ENCODE measurements at regions of chr13 and their contacts with region 1.

Region 1: DNA sequence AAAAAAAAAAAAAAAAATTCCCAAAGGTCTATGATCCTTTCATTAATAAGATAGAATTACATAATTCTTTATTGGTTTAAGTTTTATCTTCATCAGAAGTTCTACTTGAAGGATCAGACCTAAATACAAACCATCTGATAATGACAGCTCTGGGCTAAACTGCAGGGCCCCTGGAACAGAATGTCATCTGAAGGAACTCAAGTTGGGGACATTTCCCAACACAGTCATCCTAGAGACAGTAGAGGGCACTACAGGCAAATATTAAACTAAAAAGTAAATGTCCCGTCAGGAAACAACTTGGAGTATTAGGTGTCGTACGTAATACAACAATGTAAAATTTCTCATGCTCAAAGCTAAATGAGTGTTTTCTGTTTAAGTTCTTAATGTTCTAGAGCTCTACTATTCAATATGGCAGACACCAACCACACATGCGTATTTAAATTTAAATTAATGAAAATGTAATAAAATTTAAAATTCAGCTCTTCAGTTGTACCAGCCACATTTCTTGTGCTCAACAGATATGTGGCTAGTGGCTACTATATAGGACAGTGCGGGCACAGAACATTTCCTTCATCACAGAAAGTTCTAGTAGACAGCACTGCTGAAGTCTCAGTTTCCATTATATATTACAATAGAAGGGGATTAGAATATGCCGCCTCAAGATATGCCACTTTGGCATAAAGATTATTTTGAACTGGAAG is 21.8 kb upstream of the NAXD start:
- DNase-seq: peak; percentile 81
- CTCF ChIP-seq: peak; percentile 61

Region 2: DNA sequence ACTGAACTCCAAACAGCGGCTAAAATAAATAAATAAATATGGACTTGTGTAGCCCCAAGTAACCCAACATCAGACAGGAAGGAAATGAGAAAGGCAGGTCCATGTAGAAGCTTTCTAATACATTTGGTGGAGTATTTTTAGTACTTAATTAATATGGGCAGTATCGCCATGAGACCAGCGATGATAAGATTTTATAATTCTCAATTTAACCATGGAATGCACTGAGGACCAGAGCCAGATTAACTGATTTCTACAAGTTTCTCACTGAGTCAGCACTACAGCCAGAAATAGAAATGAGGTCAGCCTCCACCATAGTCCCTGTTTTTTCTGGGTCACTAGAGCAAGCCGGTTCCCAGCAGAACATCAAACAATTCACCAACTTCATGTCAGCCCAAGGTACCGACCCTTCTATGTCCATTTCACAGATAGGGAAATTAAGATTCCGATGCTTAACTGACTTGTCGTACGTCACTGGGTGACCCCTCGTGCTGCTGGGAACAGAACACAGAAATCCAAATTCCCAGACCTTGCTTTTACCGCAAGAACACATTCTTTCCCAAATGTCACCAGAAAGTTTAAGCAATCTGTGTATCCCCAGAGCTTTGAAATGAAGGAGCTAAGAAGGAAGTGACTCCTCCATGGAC is 377.1 kb before region 1 on chr13:
- in situ Hi-C with region 1: loop called (anchors 25 kb)
- DNase-seq: no peak
- CTCF ChIP-seq: no peak